HepG2 (cell line): ENCODE measurements at regions of chr6 and their contacts with region 1.

Region 1: DNA sequence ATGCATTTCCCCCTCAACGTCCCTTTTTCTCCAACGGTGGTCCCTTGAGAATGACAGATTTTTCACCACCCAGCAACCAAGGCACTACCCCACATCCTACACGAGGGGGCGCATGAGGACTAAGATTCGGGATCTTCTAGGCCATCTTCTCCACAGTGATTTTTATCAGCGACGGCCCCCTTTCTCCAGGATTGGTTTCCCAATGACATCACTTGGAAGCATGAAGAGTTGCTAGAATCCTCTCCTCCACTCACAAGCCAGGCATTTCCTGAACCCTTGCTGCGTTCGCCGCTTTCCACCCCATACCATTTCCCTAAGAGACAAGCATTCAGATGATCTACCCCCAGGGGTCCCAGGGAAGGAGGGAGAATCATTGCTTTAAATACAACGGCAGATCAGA is 252.0 kb downstream of the HIVEP2 start:
- DNase-seq: peak; percentile 62
- ATAC-seq: peak; percentile 84
- H3K4me3 ChIP-seq: no peak overlapping the region
- H3K27ac ChIP-seq: no peak overlapping the region
- H3K4me1 ChIP-seq: peaks cover 20% of the 10 kb centered on the region
- H3K27me3 ChIP-seq: peaks cover 0 to 21% of the 10 kb centered on the region in 2 experiments; a peak in 3 of 5 replicates
- CTCF ChIP-seq: peak; percentile 96
- EP300 ChIP-seq: no peak
- POLR2A ChIP-seq: no peak
- RAD21 ChIP-seq: peak; percentile 93

Region 2: GRCh38 chr6:142566628-142567396 is 126.1 kb before region 1 on chr6:
- CTCF ChIA-PET with region 1: no interaction called
- POLR2A ChIA-PET with region 1: no interaction called
- in situ Hi-C with region 1: no loop called
- intact Hi-C with region 1: loop called (anchors 5 kb)
- DNase-seq: peak; percentile 64
- ATAC-seq: peak; percentile 92
- H3K4me3 ChIP-seq: no peak overlapping the region
- H3K27ac ChIP-seq: no peak overlapping the region
- H3K4me1 ChIP-seq: no peaks in the 10 kb centered on the region
- H3K27me3 ChIP-seq: no peaks in the 10 kb centered on the region; a peak in 2 of 5 replicates
- CTCF ChIP-seq: peak; percentile 87
- EP300 ChIP-seq: no peak
- POLR2A ChIP-seq: no peak
- RAD21 ChIP-seq: peak; percentile 70

Region 3: GRCh38 chr6:142653710-142654420 is 39.1 kb before region 1 on chr6:
- CTCF ChIA-PET with region 1: no interaction called
- POLR2A ChIA-PET with region 1: no interaction called
- in situ Hi-C with region 1: no loop called
- intact Hi-C with region 1: no loop called
- DNase-seq: no peak
- ATAC-seq: no peak
- H3K4me3 ChIP-seq: no peak overlapping the region
- H3K27ac ChIP-seq: no peak overlapping the region
- H3K4me1 ChIP-seq: no peaks in the 10 kb centered on the region; the same call in 1 of the 2 replicates
- H3K27me3 ChIP-seq: peaks cover 0 to 13% of the 10 kb centered on the region in 2 experiments; a peak in 3 of 5 replicates
- CTCF ChIP-seq: no peak
- EP300 ChIP-seq: no peak
- POLR2A ChIP-seq: no peak
- RAD21 ChIP-seq: no peak

Region 4: DNA sequence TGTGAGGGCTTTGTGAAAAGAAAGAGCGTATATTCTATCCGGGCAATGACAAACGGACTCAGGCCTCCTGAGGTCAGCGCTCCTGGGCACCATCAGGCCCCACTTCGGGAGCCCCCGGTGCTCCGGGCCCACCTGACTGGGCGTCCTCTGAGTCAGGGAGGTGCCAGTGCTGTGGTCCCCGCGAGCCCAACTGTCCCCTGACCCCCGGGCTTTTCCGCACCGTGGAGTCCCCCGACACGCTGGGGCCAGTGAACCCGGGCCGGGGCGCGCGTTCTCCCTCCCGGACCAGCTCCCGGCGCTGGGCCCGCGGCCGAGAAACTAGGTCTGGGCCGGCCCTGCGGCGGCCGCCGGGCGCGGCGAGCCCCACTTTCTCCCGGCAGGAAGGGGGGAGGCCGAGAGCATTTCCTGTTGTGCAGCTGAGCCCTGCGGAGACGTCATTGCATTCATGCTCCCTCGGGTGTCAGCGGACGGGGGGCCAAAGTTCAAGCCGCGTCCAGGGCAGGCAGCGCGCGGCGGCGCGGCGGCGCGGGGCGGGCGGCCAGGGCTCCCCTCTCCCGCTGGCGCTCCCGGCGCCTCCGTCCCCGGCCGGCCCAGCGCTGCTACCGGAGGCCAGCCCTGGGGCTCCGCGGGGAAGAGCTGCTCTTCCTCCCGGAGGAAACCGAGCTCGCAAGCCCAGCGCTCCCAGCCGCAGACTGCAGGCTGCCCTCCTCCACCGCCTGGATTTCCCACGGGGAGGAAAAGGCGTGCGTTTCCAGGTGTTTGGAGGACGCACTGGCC is 233.7 kb after region 1 on chr6:
- CTCF ChIA-PET with region 1: no interaction called
- POLR2A ChIA-PET with region 1: interaction called, 3 read pairs
- in situ Hi-C with region 1: no loop called
- intact Hi-C with region 1: loop called (anchors 5 kb)
- DNase-seq: peak; percentile 93
- ATAC-seq: peak; percentile 97
- H3K4me3 ChIP-seq: peak overlapping the region; percentile 84 to 99 (median 93)
- H3K27ac ChIP-seq: peak overlapping the region; percentile 99
- H3K4me1 ChIP-seq: peaks cover 38% of the 10 kb centered on the region
- H3K27me3 ChIP-seq: no peaks in the 10 kb centered on the region; a peak in 1 of 5 replicates
- CTCF ChIP-seq: no peak
- EP300 ChIP-seq: peak; percentile 57 to 85; a peak in 3 of 4 replicates
- POLR2A ChIP-seq: peak; percentile 84 to 93; a peak in 3 of 4 replicates
- RAD21 ChIP-seq: peak; percentile 83

Region 5: DNA sequence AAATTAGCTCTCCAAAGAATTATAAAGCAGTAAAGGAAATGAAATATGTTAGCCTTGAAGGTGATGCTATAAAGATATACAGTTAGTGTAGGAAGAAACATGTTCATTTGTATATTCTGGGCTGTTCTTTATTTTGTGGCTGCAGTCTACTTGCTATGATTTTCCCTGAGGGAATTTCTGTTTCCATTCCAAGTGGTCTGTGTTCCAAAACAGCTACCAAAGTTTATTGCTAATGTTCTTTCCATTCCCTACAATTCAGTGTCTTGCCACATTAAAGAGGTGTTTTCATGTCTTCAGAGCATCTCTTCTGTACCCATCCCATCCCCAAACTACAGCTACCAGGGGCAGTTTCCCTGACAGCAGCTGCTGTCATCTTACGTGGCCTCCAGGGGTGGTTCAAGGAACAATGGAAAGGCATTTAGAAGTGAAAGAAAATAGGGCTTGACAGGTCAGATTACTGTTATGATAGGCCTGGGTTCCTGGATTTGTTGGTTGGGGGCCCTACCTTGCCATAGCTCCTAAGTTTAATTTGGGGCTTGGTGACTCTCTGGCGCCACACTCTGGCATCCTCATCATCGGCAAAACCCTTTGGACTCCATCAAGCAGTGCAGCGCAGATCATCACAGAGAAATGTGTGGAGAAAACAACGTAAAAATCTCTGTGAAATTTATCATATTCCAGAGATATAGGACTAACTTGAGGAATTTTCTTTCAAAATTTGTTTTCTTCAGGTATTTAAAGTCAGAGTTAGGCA is 333.9 kb after region 1 on chr6:
- CTCF ChIA-PET with region 1: interaction called, 41 read pairs
- POLR2A ChIA-PET with region 1: no interaction called
- in situ Hi-C with region 1: loop called (anchors 5 kb)
- intact Hi-C with region 1: loop called (anchors 1 kb)
- DNase-seq: peak; percentile 38
- ATAC-seq: peak; percentile 87
- H3K4me3 ChIP-seq: no peak overlapping the region
- H3K27ac ChIP-seq: no peak overlapping the region
- H3K4me1 ChIP-seq: peaks cover 6% of the 10 kb centered on the region; the same call in 1 of the 2 replicates
- H3K27me3 ChIP-seq: no peaks in the 10 kb centered on the region
- CTCF ChIP-seq: peak; percentile 83
- EP300 ChIP-seq: no peak
- POLR2A ChIP-seq: no peak
- RAD21 ChIP-seq: peak; percentile 85

Region 6: GRCh38 chr6:143279385-143279784 is 586.4 kb after region 1 on chr6:
- CTCF ChIA-PET with region 1: interaction called, 4 read pairs
- POLR2A ChIA-PET with region 1: no interaction called
- in situ Hi-C with region 1: no loop called
- intact Hi-C with region 1: loop called (anchors 1 kb)
- DNase-seq: peak; percentile 34
- ATAC-seq: peak; percentile 98
- H3K4me3 ChIP-seq: no peak overlapping the region
- H3K27ac ChIP-seq: no peak overlapping the region
- H3K4me1 ChIP-seq: no peaks in the 10 kb centered on the region
- H3K27me3 ChIP-seq: no peaks in the 10 kb centered on the region
- CTCF ChIP-seq: peak; percentile 81
- EP300 ChIP-seq: no peak
- POLR2A ChIP-seq: no peak
- RAD21 ChIP-seq: peak; percentile 61

Region 7: GRCh38 chr6:143410859-143411270 is 717.9 kb after region 1 on chr6:
- CTCF ChIA-PET with region 1: no interaction called
- POLR2A ChIA-PET with region 1: no interaction called
- in situ Hi-C with region 1: loop called (anchors 5 kb)
- intact Hi-C with region 1: loop called (anchors 5 kb)
- DNase-seq: peak; percentile 95
- ATAC-seq: peak; percentile 75
- H3K4me3 ChIP-seq: no peak overlapping the region; a peak in 1 of 6 replicates
- H3K27ac ChIP-seq: peak overlapping the region; percentile 53
- H3K4me1 ChIP-seq: peaks cover 64% of the 10 kb centered on the region
- H3K27me3 ChIP-seq: no peaks in the 10 kb centered on the region
- CTCF ChIP-seq: no peak
- EP300 ChIP-seq: peak in 1 of 2 experiments; percentile 97; a peak in 2 of 4 replicates
- POLR2A ChIP-seq: no peak
- RAD21 ChIP-seq: no peak

Region 8: GRCh38 chr6:143427109-143427817 is 734.3 kb after region 1 on chr6:
- CTCF ChIA-PET with region 1: interaction called, 16 read pairs
- POLR2A ChIA-PET with region 1: no interaction called
- in situ Hi-C with region 1: no loop called
- intact Hi-C with region 1: loop called (anchors 1 kb)
- DNase-seq: peak; percentile 69
- ATAC-seq: peak; percentile 100
- H3K4me3 ChIP-seq: no peak overlapping the region
- H3K27ac ChIP-seq: no peak overlapping the region
- H3K4me1 ChIP-seq: peaks cover 14% of the 10 kb centered on the region
- H3K27me3 ChIP-seq: no peaks in the 10 kb centered on the region
- CTCF ChIP-seq: peak; percentile 98
- EP300 ChIP-seq: no peak
- POLR2A ChIP-seq: no peak
- RAD21 ChIP-seq: peak; percentile 99